Activated naive CD4-positive, alpha-beta T cell treated with anti-CD3 and anti-CD28 coated beads for 36 hours (primary cell): ENCODE measurements at regions of chr6 and their contacts with region 1.

Region 1: DNA sequence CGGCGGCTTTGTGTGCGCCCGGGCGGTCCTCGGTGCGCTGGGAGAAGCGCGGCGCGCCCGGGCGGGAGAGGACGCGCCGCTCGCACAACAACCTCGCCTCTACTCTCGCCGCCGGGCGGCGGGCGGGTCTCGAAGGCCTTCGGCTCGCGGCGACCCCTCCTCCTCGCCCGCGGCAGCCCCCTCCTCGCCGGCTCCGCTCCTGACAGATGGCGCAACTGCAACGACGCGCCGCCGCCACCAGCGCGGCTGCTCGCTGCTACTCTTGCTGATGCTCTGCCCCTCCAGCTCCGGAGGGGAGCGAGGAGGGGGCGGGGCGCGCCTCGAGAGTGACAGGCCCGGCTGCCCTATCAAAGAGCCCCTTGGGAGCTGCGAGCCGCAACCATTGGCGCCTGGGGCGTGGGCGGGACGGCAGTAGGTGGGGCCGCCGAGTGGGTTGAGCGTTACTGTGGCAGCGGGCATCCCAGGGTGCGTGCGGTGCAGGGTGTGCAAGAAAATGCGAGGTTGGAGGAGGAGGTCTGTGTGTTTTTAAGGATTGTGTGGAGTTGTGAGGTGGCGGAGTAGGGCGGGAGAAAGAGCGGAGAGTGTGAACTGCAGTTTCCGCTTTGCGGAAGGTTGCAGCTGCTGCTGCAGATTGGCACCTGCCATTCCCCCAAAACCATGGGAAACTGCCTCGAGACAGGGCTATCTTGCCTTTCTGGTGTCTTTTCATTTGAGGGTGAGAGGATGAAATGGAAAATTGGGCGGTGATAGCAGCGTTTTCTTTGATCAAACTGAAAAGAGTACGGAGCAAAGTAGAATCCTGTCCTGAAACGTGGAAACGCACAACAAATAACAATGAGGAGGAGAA is at the start of gene FYN:
- DNase-seq: peak; percentile 99
- H3K4me3 Mint-ChIP-seq: peak within 1 kb of the TSS; percentile 96
- H3K27ac Mint-ChIP-seq: peak within 1 kb of the TSS; percentile 97
- H3K4me1 Mint-ChIP-seq: peaks cover 32% of the 10 kb centered on the region
- H3K27me3 Mint-ChIP-seq: no peaks in the 10 kb centered on the region
- total RNA-seq, gene FYN: 236 to 244 TPM

Region 2: DNA sequence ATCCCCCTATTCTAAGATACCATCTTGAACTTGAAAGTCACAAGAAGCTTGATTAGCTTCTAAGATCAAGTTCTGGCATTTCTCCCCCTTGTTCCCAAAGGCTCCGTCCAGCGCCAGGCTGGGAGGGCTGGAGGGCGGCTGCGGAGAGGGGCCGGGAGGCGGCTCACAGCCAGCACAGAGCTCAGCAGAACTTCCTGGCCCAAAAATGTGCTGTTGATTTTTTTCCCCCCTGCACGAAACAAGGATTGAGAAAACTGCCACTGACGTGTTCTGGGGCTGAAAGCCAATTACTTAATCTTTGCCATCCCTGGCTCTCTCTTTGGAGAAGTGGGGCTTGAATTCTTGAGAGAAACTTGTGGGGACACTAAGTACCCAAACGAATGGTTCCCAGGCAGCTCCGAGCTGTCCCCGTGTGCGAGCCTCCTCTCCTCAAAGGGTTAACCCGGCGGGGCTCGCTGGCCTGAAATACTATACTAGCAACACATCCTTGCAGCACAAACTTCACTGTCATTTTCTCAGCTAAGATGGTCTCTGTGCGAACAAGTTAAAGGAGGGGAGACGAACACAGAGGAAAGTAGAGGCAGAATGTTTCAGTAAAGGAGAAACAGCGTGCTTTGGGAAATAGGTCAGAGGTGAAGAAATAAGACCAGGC is 268.2 kb before region 1 on chr6:
- CTCF ChIA-PET with region 1: no interaction called
- intact Hi-C with region 1: loop called (anchors 2 kb)
- DNase-seq: peak; percentile 38
- H3K4me3 Mint-ChIP-seq: peak overlapping the region; percentile 82
- H3K27ac Mint-ChIP-seq: peak overlapping the region; percentile 93
- H3K4me1 Mint-ChIP-seq: peaks cover 39% of the 10 kb centered on the region
- H3K27me3 Mint-ChIP-seq: no peaks in the 10 kb centered on the region

Region 3: DNA sequence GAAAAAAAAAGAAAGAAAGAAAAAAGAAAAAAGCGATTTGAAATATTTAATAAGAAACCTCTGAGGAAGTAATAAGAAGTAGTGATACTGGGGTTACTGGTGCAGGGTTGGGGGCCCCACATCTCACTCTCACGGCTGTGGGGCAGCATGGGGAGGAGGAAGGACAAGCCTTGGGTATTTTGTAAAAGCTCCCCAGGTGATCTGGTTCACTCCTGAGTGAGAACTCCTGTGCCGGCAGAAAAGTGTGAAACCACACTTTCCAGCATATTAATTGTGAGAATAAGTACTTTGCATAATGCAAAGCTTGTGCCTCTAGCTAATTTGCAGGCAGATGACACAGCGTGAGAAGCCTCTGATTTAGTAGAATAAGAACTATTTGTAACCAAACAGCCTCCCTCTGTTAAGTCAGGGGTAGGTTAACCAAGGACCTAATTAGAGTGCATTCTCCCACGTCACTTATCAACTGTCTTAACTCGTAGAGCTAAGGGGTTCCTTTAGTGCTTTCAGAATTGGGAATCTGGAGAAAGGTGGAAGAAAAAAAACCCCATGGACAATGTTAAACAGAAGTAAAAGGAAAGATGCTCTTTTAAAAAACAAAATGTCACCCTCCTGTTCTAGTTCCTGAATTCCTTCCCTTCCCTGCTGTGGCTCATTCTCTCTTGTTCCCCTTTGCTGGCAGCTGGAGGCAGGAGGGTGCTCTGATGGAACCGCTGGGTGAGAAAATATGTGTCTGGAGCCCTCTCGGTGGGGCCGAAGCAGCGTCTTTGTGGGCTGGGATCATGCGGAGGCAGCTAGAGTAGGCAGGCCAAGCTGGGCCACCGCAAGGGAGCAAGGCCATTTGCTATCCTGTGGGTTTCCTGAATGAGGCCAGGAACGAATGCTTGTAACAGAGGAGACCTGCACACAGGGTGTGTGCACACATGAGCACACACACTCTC is 108.9 kb before region 1 on chr6:
- CTCF ChIA-PET with region 1: interaction called, 3 read pairs
- intact Hi-C with region 1: loop called (anchors 1 kb)
- DNase-seq: peak; percentile 84
- H3K4me3 Mint-ChIP-seq: peak overlapping the region; percentile 58
- H3K27ac Mint-ChIP-seq: peak overlapping the region; percentile 97
- H3K4me1 Mint-ChIP-seq: peaks cover 98% of the 10 kb centered on the region
- H3K27me3 Mint-ChIP-seq: no peaks in the 10 kb centered on the region

Region 4: DNA sequence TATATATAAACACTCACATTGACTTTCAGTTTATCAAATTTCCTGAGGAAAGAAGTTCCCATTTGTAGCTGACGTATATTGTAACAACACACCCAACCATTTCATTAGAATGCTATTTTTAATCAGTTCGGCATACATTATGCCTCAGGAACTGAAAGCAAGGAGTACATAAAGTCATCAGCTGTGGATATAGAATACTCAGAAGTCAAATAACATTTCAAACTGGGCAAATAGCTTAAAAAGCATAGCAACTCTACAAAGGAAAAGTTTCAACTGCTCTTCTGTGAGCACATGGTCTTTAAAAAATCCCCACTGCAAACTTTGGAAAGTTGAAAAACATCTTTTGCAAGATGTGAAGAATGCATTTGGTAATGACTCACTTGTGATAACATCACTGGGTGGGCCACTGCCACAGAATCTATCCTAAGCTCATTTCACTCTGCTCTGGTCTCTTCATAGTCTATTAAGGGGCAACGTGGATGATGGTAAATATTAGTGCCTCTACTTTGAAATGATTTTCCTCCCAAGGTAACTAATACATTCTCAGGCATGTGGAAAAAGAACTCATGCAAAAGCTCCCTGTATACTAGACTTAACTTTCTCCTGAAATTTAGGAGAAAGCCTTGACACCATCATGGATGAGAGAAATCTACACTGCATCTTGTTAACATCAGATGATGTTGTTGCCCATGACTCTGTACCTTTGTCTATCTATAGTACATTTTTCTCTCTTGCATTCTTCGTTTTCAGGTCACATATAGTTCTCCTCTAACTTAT is 49.4 kb before region 1 on chr6:
- CTCF ChIA-PET with region 1: interaction called, 3 read pairs
- intact Hi-C with region 1: loop called (anchors 1 kb)
- DNase-seq: no peak
- H3K4me3 Mint-ChIP-seq: peak overlapping the region; percentile 39
- H3K27ac Mint-ChIP-seq: peak overlapping the region; percentile 89
- H3K4me1 Mint-ChIP-seq: peaks cover 83% of the 10 kb centered on the region
- H3K27me3 Mint-ChIP-seq: no peaks in the 10 kb centered on the region

Region 5: GRCh38 chr6:111973118-111973761 is 99.8 kb after region 1 on chr6:
- CTCF ChIA-PET with region 1: interaction called, 3 read pairs
- intact Hi-C with region 1: loop called (anchors 1 kb)
- DNase-seq: peak; percentile 84
- H3K4me3 Mint-ChIP-seq: peak overlapping the region; percentile 70
- H3K27ac Mint-ChIP-seq: peak overlapping the region; percentile 96
- H3K4me1 Mint-ChIP-seq: peaks cover 70% of the 10 kb centered on the region
- H3K27me3 Mint-ChIP-seq: no peaks in the 10 kb centered on the region

Region 6: DNA sequence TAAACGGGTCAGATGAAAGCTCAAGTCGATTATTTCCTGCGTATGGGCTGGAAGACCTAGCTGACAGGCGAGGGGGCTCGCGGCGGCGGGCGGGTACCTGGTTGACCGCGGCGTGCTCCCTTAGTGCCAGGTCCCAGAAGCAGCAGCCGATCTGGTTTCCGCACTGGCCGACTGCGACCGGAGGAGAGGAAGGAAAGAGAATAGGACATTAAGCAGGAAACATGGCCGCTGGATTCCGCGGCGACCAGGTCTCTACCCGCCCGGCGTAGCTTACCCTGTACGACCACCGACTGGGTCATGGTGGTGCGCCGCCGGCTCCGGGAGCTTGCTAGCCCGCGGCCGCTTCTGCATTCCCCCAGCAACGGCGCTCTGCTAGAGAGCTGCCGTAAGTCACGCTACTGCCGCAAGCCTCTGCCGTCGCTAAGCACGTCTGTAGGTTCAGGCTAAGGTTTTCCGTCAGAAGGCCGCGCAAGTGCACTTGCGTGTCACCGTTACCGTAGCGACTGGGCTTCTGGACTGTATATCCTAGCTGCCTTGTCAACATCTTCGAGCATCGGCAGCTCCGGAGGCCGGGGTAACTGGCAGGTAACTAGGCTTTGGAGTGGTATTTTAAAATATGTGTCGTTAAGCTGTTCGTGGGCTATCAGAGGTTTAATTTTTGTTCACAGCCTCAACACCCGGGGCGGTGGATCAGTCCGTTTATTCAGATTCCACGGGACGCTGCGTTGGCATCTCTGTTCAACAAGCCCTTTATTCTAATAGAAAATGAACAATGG is 213.9 kb after region 1 on chr6 and contains the starts of genes FAM229B and TUBE1:
- CTCF ChIA-PET with region 1: no interaction called
- intact Hi-C with region 1: loop called (anchors 1 kb)
- DNase-seq: peak; percentile 95
- H3K4me3 Mint-ChIP-seq: no peak within 1 kb of the TSS
- H3K27ac Mint-ChIP-seq: no peak within 1 kb of the TSS
- H3K4me1 Mint-ChIP-seq: peaks cover 7% of the 10 kb centered on the region
- H3K27me3 Mint-ChIP-seq: no peaks in the 10 kb centered on the region
- total RNA-seq, gene FAM229B: 9.5 to 10.2 TPM
- total RNA-seq, gene TUBE1: 53.7 to 62.7 TPM